PC-9 (cell line): ENCODE measurements at regions of chr9 and their contacts with region 1.

Region 1: GRCh38 chr9:14221558-14221957 is 92.4 kb downstream of the NFIB start:
- DNase-seq: peak; percentile 57 to 92
- H3K4me3 ChIP-seq: peak overlapping the region; percentile 23; the same call in 1 of the 2 replicates
- H3K27ac ChIP-seq: peak overlapping the region; percentile 95
- H3K4me1 ChIP-seq: peaks cover 19% of the 10 kb centered on the region
- H3K27me3 ChIP-seq: no peaks in the 10 kb centered on the region
- CTCF ChIP-seq: no peak

Region 2: GRCh38 chr9:14170973-14171596 is 50.5 kb before region 1 on chr9:
- CTCF ChIA-PET with region 1: no interaction called
- POLR2A ChIA-PET with region 1: no interaction called
- intact Hi-C with region 1: loop called (anchors 5 kb)
- DNase-seq: peak in 1 of 2 experiments; percentile 68
- H3K4me3 ChIP-seq: no peak overlapping the region
- H3K27ac ChIP-seq: peak overlapping the region; percentile 72
- H3K4me1 ChIP-seq: peaks cover 17% of the 10 kb centered on the region
- H3K27me3 ChIP-seq: no peaks in the 10 kb centered on the region
- CTCF ChIP-seq: no peak

Region 3: GRCh38 chr9:14238552-14238951 is 17.0 kb after region 1 on chr9:
- CTCF ChIA-PET with region 1: no interaction called
- POLR2A ChIA-PET with region 1: no interaction called
- intact Hi-C with region 1: loop called (anchors 1 kb)
- DNase-seq: peak; percentile 50 to 93
- H3K4me3 ChIP-seq: peak overlapping the region; percentile 41; the same call in 1 of the 2 replicates
- H3K27ac ChIP-seq: peak overlapping the region; percentile 99
- H3K4me1 ChIP-seq: peaks cover 49% of the 10 kb centered on the region
- H3K27me3 ChIP-seq: no peaks in the 10 kb centered on the region
- CTCF ChIP-seq: no peak

Region 4: DNA sequence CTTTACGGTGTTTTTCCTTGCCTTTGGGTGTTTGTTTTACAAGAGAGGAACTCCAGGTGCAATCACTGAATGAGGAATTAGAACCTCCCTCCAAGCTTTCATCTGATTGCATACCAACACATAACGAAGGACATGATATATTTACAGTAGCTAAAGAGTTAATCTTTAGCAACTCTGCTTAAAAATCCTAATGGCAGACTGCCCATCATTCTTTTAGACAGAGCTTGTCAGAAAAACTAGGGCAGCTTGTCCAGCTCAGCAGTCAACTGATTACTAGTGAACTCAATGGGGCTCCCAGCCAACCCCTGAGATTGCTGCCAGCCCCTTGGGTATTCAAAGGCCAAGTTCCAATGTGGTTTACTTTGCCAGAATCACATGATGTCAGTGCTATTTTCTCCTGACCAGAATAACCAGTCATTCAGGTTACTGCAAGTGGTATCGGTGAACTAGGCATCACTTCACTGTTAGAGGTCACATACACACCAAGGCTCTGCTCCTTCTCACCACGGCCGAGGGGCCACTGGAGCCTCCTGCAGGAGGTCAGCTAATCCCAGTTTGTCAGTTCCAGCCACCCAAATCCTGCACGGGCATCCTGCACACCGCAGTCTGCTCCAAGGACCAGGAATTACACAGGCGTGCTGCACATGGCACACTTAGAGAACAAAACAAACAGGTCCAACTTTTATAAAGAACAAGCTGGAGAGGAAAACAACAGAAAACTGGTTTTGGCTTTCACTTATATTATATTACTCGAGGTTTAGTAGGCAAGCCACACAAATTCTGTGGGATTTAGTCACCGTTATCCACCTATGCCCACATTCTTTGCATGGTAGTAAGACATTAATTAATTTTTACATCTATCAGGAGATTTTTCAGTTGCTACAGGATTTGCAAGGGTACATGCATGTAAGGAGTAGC is 29.9 kb after region 1 on chr9:
- CTCF ChIA-PET with region 1: no interaction called
- POLR2A ChIA-PET with region 1: no interaction called
- intact Hi-C with region 1: loop called (anchors 1 kb)
- DNase-seq: peak; percentile 81 to 96
- H3K4me3 ChIP-seq: peak overlapping the region; percentile 47; the same call in 1 of the 2 replicates
- H3K27ac ChIP-seq: peak overlapping the region; percentile 98
- H3K4me1 ChIP-seq: peaks cover 60% of the 10 kb centered on the region
- H3K27me3 ChIP-seq: no peaks in the 10 kb centered on the region
- CTCF ChIP-seq: no peak